ENCODE measurements at regions of chr11 and their contacts with region 1.

Region 1: DNA sequence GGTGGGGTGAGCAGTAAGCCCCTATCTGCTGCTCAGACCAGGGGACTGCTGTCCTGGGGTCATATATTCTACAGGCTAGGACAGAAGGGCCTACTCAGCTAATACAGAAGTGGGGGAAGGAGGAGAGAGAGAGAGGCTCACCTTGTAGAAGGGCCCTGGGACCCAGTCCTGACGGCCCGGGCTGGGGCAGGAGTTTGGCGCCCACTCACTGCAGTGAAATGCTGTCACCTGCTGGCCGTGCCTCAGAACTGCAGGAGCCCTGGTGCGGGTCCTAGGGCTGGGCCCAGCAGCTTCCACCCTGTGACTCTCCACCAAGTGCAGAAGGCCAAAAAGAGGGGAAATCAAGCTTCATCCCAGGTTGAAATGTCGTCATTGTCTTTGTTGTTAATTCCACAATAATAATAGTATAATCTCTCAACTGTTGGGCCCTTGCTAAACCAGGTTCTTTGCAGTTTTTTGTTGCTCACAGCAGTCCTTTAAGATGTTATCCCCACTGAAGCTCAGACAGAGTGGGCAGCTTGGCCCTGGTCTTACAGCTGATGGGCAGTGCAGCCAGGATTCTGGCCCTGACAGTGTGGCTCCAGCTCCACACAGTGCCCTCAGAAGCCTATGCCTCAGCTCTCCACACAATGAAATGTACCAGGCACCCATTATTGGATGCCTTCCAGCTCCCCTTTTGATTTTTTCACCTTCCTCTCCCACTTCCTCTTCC is 29.6 kb downstream of the TRIM29 start:
- DNase-seq: peak; percentile 64 to 78
- H3K4me3 ChIP-seq: no peak overlapping the region
- H3K27ac ChIP-seq: peak overlapping the region in 1 of 2 donors; percentile 33
- H3K4me1 ChIP-seq: no peaks in the 10 kb centered on the region
- H3K27me3 ChIP-seq: no peaks in the 10 kb centered on the region
- CTCF ChIP-seq: peak; percentile 94 to 99 (median 97)
- POLR2A ChIP-seq: no peak

Region 2: GRCh38 chr11:118462178-118462577 is 1646.1 kb before region 1 on chr11:
- intact Hi-C with region 1: no loop called
- DNase-seq: no peak
- H3K4me3 ChIP-seq: no peak overlapping the region
- H3K27ac ChIP-seq: no peak overlapping the region
- H3K4me1 ChIP-seq: peaks cover 0 to 7% of the 10 kb centered on the region in 2 donors
- H3K27me3 ChIP-seq: no peaks in the 10 kb centered on the region
- CTCF ChIP-seq: no peak
- POLR2A ChIP-seq: no peak

Region 3: DNA sequence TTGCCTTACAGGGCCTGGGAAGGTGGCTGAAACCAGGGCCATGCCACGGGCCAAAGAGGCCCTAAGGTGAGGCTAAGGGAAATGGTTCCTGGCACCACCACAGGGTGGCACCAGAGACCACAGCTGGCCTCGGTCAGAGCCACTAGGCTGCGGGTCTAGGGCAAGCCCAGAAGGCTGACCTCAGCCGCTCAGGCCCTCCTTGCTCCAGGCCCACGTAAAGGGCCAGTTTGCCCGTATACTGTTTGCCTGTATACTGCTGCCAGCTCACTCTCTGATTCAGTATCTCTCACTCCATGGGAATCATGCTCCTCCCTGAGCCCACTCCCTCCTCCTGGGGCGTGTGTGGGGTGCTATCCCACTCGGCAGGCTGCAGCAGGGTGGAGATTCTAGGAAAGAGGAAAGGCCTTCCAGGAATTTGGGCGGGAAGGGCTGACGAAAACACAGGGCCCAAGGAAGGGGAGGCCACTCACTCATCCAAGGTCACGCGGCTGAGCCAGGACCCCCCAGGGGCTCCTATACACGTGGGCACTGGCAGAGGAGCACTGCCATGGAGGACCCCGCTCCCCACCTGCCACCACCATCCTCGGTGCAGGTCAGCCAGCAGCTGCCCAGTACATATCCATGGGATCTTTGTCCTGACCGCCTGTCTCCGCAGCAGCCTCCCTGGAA is 441.7 kb before region 1 on chr11:
- intact Hi-C with region 1: loop called (anchors 10 kb)
- DNase-seq: peak; percentile 62 to 77
- H3K4me3 ChIP-seq: no peak overlapping the region
- H3K27ac ChIP-seq: no peak overlapping the region
- H3K4me1 ChIP-seq: peaks cover 0 to 8% of the 10 kb centered on the region in 2 donors
- H3K27me3 ChIP-seq: no peaks in the 10 kb centered on the region
- CTCF ChIP-seq: peak; percentile 93 to 96 (median 94)
- POLR2A ChIP-seq: no peak

Region 4: GRCh38 chr11:120013325-120014270 is 94.7 kb before region 1 on chr11:
- intact Hi-C with region 1: no loop called
- DNase-seq: peak in 1 of 2 donors; percentile 35
- H3K4me3 ChIP-seq: peak overlapping the region in 1 of 3 donors; percentile 40
- H3K27ac ChIP-seq: no peak overlapping the region
- H3K4me1 ChIP-seq: no peaks in the 10 kb centered on the region
- H3K27me3 ChIP-seq: peaks cover 0 to 24% of the 10 kb centered on the region in 2 donors
- CTCF ChIP-seq: peak; percentile 41 to 64 (median 63)
- POLR2A ChIP-seq: no peak

Measured in breast epithelium (tissue), 4 donors.